Natural killer cell (primary cell): ENCODE measurements at regions of chr18 and their contacts with region 1.

Region 1: DNA sequence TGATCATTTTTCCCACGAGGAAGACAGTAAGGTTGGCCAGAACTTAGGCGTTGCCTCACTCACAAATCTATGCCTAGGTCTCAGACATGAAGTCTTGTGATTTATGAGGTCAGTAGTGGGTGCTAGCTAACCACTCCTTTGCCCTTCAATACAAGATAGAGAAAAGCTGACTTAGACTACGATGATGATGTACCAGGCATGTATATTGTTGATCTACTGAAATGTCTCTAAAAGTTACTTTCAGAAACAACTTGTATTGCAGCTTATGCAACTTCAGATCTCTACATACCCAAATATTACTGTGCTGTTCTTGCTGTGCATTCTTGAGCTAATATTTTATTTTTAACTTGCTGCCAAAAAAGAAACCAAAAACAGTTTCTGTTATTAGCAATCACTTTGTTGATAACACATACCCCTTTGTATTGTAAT is 30.6 kb downstream of the MAPRE2 start:
- DNase-seq: no peak
- ATAC-seq: peak; percentile 34 to 57 (median 52)
- H3K4me3 ChIP-seq: no peak overlapping the region
- H3K4me3 Mint-ChIP-seq: peak overlapping the region; percentile 11
- H3K27ac ChIP-seq: peak overlapping the region; percentile 23
- H3K27ac Mint-ChIP-seq: peak overlapping the region; percentile 86 to 87
- H3K4me1 ChIP-seq: no peaks in the 10 kb centered on the region
- H3K4me1 Mint-ChIP-seq: peaks cover 78 to 90% of the 10 kb centered on the region in 2 donors
- H3K27me3 ChIP-seq: no peaks in the 10 kb centered on the region
- H3K27me3 Mint-ChIP-seq: no peaks in the 10 kb centered on the region
- CTCF ChIP-seq: no peak

Region 2: DNA sequence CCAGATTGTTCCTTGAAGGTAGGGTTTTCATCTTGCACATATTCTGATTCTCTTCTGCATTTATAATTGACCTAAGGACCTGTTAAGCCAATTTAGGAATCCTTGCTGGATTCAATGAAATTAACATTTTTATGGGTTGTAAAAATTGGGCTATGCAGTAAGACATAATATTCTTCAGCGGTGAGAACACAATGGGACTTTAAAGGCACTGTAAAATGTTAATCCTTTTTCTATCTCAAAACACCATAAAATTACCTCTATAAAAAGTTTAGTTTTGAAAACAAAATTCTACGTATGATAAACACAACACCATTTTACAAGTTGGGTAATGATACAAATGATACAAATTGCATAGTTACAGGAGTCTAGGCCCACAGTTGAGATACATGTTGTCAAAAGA is 530.9 kb before region 1 on chr18:
- intact Hi-C with region 1: no loop called
- DNase-seq: no peak
- ATAC-seq: no peak
- H3K4me3 ChIP-seq: no peak overlapping the region
- H3K4me3 Mint-ChIP-seq: no peak overlapping the region
- H3K27ac ChIP-seq: no peak overlapping the region
- H3K27ac Mint-ChIP-seq: no peak overlapping the region
- H3K4me1 ChIP-seq: no peaks in the 10 kb centered on the region
- H3K4me1 Mint-ChIP-seq: no peaks in the 10 kb centered on the region
- H3K27me3 ChIP-seq: no peaks in the 10 kb centered on the region
- H3K27me3 Mint-ChIP-seq: peaks cover 0 to 2% of the 10 kb centered on the region in 2 donors
- CTCF ChIP-seq: no peak

Region 3: GRCh38 chr18:35029770-35030169 is 42.1 kb before region 1 on chr18:
- intact Hi-C with region 1: loop called (anchors 5 kb)
- DNase-seq: peak in 1 of 2 donors; percentile 71
- ATAC-seq: peak; percentile 74 to 87 (median 77)
- H3K4me3 ChIP-seq: peak overlapping the region; percentile 44
- H3K4me3 Mint-ChIP-seq: peak overlapping the region; percentile 94
- H3K27ac ChIP-seq: peak overlapping the region; percentile 90
- H3K27ac Mint-ChIP-seq: peak overlapping the region; percentile 95
- H3K4me1 ChIP-seq: peaks cover 15% of the 10 kb centered on the region
- H3K4me1 Mint-ChIP-seq: peaks cover 51 to 56% of the 10 kb centered on the region in 2 donors
- H3K27me3 ChIP-seq: no peaks in the 10 kb centered on the region
- H3K27me3 Mint-ChIP-seq: no peaks in the 10 kb centered on the region
- CTCF ChIP-seq: peak; percentile 48